HEK293 (cell line): ENCODE measurements at regions of chr1 and their contacts with region 1.

Region 1: GRCh38 chr1:236603991-236604904 is at the start of gene HEATR1:
- H3K4me3 ChIP-seq: peak within 1 kb of the TSS; percentile 74
- H3K27ac ChIP-seq: peak within 1 kb of the TSS; percentile 76
- H3K4me1 ChIP-seq: peaks cover 7% of the 10 kb centered on the region
- CTCF ChIP-seq: peak; percentile 61; the same call in 1 of the 2 replicates

Region 2: DNA sequence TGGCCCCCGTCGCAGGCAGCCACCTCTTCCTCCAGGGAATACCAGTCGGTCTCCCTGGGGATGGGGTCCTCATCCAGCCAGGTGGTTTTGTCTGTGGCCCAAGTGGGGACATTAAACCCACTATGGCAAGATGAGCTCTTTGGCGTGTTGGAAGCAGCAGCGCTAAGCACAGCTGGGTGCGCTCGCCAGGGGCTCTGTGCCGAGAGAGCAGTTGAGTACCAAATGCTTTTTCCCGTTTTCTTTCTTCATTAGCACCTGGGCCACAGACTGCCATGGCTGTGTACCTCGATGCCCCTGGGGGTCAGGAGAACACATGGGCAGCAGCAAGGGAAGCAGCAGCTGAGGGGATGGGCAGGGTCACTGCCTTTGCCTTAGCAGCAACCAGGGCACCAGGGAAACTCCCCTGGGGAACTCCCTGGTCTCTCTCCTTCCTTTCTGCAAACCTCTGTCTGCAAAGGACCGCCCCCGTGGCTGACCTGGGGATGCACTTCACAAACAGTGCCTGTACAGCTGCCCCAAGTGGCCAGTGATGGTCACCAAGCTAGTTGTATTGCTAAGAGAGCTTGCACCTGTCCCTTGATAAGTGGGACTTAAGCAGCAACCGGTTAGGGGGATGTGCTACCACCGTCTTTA is 179.1 kb before region 1 on chr1:
- CTCF ChIA-PET with region 1: no interaction called
- POLR2A ChIA-PET with region 1: no interaction called
- H3K4me3 ChIP-seq: no peak overlapping the region
- H3K27ac ChIP-seq: no peak overlapping the region
- H3K4me1 ChIP-seq: no peaks in the 10 kb centered on the region
- CTCF ChIP-seq: no peak

Region 3: DNA sequence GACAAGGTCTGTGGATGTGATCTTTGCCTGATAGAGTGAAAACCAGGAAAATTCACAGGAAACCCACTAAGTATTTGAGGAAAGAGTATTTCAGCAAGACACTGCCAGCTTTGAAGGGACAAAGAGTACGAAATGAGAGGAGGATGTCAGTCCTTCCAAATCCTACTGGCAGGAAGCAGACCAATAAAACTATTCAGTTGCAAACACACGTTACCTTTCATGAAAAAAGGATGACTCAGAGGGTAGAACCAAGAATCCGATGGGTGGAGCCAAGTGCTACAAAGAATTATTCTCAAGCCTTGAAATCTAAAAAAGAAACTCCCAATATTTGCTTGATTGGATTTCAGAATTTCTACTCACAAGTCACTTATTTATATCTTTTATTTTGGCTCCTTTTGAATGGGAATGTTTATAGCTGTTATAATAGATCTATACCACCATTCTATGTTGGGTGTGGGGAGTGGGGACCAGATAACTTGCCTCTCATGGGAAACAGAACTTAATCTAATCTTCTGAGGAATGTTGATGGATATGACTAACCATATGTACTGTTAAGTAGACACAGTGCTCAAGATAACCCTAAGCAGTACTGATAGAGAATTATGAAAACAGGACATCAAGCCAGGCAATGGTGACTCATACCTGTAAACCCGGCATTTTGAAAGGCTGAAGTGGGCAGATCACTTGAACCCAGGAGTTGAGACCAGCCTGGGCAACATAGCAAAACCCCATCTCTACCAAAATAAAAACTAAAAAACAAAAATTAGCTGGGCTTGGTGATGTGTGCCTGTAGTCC is 19.3 kb after region 1 on chr1:
- CTCF ChIA-PET with region 1: interaction called, 13 read pairs
- POLR2A ChIA-PET with region 1: interaction called, 13 read pairs
- H3K4me3 ChIP-seq: no peak overlapping the region
- H3K27ac ChIP-seq: no peak overlapping the region
- H3K4me1 ChIP-seq: no peaks in the 10 kb centered on the region
- CTCF ChIP-seq: no peak

Region 4: DNA sequence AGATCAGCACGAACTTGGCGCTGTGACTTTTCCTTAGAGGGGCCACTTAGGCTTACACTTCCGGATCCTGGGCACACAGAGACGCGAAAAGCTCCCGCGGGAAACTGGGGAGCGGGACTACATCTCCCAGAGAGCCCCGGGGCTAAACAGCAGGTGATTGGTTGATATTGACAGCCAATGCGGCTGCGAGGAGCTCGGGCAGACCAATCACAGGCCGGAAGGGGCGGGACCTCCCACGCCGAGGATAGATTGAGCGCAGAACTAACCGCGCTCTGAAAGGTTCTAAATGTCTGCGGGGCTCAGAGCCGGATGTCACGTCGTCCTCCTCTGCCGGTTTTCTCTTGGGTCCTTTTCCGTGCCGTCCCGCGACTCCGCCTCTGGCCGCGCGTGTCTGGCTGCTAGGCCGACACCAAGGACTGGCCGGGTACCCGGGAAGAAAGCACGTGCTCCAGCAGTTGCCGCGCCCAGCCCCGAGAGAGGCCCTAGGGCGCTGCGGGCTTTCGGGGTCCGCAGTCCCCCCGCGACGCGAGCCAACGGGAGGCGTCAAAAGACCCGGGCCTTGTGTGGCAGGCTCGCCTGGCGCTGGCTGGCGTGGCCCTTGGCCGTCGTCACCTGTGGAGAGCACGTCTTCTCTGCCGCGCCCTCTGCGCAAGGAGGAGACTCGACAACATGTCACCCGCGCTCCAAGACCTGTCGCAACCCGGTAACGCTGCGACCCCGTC is 190.9 kb after region 1 on chr1 and contains the start of gene MTR:
- CTCF ChIA-PET with region 1: interaction called, 5 read pairs
- POLR2A ChIA-PET with region 1: interaction called, 19 read pairs
- H3K4me3 ChIP-seq: peak within 1 kb of the TSS; percentile 73
- H3K27ac ChIP-seq: peak within 1 kb of the TSS; percentile 78
- H3K4me1 ChIP-seq: peaks cover 6% of the 10 kb centered on the region; the same call in 1 of the 2 replicates
- CTCF ChIP-seq: peak; percentile 74; the same call in 1 of the 2 replicates

Region 5: DNA sequence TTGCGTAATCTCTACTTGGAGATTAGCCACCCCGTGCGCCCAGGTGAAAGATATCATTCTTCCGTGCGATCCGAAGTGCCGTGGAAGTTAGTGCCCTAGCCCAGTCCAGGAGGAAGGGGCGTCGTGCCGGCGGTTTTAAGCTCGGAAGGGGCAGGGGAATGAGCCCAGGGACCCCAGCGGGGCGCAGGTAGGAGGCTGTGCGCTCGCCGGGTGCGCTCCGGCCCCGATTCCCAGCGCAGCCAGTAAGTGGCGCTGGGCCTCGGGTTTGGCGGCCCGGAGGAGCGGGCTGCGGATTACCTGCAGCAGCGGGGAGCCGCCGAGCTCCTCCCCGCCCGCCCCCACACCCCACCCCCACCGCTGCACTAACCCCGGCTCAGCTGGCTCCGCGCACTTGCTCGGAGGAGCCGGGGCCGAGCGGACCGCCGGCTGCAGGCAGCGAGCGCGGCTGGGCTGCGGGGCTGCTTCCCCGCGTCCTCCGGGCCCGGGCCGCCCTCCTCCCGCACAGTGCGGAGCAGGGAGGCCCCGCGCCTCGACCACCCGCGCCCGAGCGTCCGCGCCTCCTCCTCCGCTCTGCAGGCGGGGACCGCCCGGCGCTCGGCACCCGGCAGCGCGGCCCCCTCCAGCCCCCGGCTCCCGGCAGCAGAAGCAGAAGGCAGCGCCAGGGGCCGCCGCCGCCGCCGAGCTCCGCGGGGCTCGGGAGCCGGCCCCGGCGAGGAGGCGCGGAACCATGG is 437.7 kb after region 1 on chr1 and contains the start of gene RYR2:
- CTCF ChIA-PET with region 1: interaction called, 3 read pairs
- POLR2A ChIA-PET with region 1: interaction called, 11 read pairs
- H3K4me3 ChIP-seq: peak within 1 kb of the TSS; percentile 69
- H3K27ac ChIP-seq: peak within 1 kb of the TSS; percentile 74; the same call in 1 of the 2 replicates
- H3K4me1 ChIP-seq: peaks cover 28% of the 10 kb centered on the region
- CTCF ChIP-seq: peak; percentile 97